ENCODE measurements at regions of chr1 and their contacts with region 1.

Region 1: GRCh38 chr1:43227143-43227764 is 42.5 kb upstream of the TMEM125 start:
- DNase-seq: peak; percentile 34
- ATAC-seq: peak; percentile 99
- H3K4me3 ChIP-seq: no peak overlapping the region
- H3K27ac ChIP-seq: no peak overlapping the region
- H3K4me1 ChIP-seq: no peaks in the 10 kb centered on the region; the same call in none of the 2 replicates
- H3K27me3 ChIP-seq: no peaks in the 10 kb centered on the region
- CTCF ChIP-seq: peak; percentile 91 to 95 (median 94)
- EP300 ChIP-seq: no peak
- POLR2A ChIP-seq: no peak
- RAD21 ChIP-seq: peak; percentile 97

Region 2: GRCh38 chr1:43199064-43199726 is 28.1 kb before region 1 on chr1:
- CTCF ChIA-PET with region 1: interaction called, 11 read pairs
- POLR2A ChIA-PET with region 1: no interaction called
- RAD21 ChIA-PET with region 1: interaction called, 9 read pairs
- SMC1A ChIA-PET with region 1: interaction called, 7 read pairs
- in situ Hi-C with region 1: no loop called
- intact Hi-C with region 1: no loop called
- DNase-seq: peak; percentile 88
- ATAC-seq: peak; percentile 93
- H3K4me3 ChIP-seq: peak overlapping the region; percentile 33
- H3K27ac ChIP-seq: peak overlapping the region; percentile 81
- H3K4me1 ChIP-seq: peaks cover 17% of the 10 kb centered on the region
- H3K27me3 ChIP-seq: no peaks in the 10 kb centered on the region
- CTCF ChIP-seq: no peak
- EP300 ChIP-seq: peak; percentile 93 to 96
- POLR2A ChIP-seq: peak; percentile 46; the same call in 1 of the 2 replicates
- RAD21 ChIP-seq: no peak

Region 3: GRCh38 chr1:43414634-43415223 is 187.5 kb after region 1 on chr1:
- CTCF ChIA-PET with region 1: interaction called, 61 read pairs
- POLR2A ChIA-PET with region 1: interaction called, 5 read pairs
- RAD21 ChIA-PET with region 1: interaction called, 37 read pairs
- SMC1A ChIA-PET with region 1: interaction called, 63 read pairs
- in situ Hi-C with region 1: loop called (anchors 5 kb)
- intact Hi-C with region 1: loop called (anchors 1 kb)
- DNase-seq: no peak
- ATAC-seq: peak; percentile 90
- H3K4me3 ChIP-seq: no peak overlapping the region
- H3K27ac ChIP-seq: no peak overlapping the region
- H3K4me1 ChIP-seq: peaks cover 7% of the 10 kb centered on the region
- H3K27me3 ChIP-seq: no peaks in the 10 kb centered on the region
- CTCF ChIP-seq: peak; percentile 54 to 57 (median 55)
- EP300 ChIP-seq: no peak
- POLR2A ChIP-seq: no peak
- RAD21 ChIP-seq: peak; percentile 67

Region 4: DNA sequence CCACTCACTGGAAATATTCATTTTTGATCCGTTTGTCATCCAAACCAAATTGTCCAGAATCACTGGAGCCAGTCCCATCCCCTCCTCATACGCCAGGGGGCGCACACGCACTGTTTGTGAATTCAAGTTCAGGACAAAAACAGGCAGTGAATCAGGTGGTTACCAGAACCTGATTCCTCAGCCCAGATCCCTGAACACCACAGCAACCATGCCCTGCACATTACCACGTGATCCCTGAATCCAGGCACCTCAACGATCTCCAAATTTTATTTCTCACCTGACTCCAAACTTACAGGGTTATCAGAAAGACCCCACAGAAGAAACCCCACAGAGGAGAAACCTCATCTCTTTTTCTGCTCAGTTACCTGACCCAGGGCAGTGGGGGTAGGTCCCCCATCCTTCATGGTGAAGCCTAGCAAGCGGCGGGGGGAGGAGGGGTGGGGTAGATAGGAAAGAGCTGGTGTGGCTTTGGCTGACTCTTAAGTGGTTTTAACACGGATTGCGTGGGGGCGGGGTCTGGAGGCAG is 302.0 kb after region 1 on chr1:
- CTCF ChIA-PET with region 1: interaction called, 3 read pairs
- POLR2A ChIA-PET with region 1: no interaction called
- RAD21 ChIA-PET with region 1: interaction called, 5 read pairs
- SMC1A ChIA-PET with region 1: interaction called, 7 read pairs
- in situ Hi-C with region 1: no loop called
- intact Hi-C with region 1: loop called (anchors 5 kb)
- DNase-seq: peak; percentile 30
- ATAC-seq: peak; percentile 91
- H3K4me3 ChIP-seq: no peak overlapping the region
- H3K27ac ChIP-seq: no peak overlapping the region
- H3K4me1 ChIP-seq: no peaks in the 10 kb centered on the region
- H3K27me3 ChIP-seq: peaks cover 7 to 11% of the 10 kb centered on the region in 2 experiments
- CTCF ChIP-seq: peak; percentile 91 to 95 (median 95); a peak in 5 of 6 replicates
- EP300 ChIP-seq: no peak
- POLR2A ChIP-seq: no peak
- RAD21 ChIP-seq: peak; percentile 92

Measured in GM12878 (cell line).